HEK293 (cell line): ENCODE measurements at regions of chr18 and their contacts with region 1.

Region 1: DNA sequence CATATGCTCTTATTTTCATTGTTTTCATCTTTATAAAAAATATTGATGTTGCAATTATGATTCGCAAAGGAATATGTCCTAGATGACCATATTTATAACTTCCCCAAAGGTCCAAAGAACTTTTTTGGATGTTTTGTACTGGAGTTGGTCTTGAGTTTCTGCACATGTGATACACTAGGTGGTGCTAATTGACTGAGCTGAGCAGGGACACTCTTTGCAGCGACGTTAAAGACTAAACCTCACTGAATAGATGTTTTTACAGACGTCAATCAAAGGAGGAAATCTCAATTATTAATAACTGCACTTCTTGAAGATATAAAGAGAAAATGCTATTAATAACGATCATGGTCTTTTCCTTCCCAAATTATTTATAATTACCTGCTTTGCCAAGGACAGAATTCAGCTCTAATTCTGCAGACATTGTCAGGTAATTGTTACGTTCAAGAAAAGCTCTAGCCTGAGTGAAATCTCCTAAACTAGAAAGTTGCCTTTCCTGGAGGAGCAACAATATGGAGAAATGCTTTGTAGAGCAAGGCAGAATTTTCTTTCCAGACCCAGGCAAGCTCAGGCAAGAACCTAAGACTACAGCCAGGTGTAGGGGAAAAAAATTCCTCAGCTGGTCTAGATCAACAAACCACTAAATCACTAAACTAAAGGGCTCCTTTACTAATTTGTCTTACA is 119.3 kb upstream of the RBBP8 start:
- H3K4me3 ChIP-seq: no peak overlapping the region
- H3K27ac ChIP-seq: no peak overlapping the region
- H3K4me1 ChIP-seq: no peaks in the 10 kb centered on the region; the same call in 1 of the 2 replicates
- CTCF ChIP-seq: peak; percentile 57

Region 2: DNA sequence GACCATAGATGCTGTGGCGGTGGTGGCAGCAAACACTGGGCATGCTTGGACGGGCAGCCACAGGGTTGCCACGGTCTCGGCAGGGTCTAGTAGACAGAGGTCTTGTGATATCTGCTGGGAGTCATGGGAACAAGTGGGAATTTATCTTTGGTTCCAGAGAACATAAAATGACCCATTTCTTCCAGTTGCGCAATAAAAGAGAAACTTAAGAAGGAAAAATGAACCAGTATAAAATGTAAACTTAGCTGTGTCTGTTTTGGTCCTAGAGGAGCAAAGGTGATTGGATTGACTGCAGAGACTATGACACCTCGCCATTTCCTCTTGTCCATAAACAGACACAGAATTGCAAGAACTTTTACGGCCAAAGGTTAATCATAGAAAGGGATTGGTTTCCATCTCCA is 13.2 kb before region 1 on chr18:
- CTCF ChIA-PET with region 1: interaction called, 32 read pairs
- POLR2A ChIA-PET with region 1: interaction called, 3 read pairs
- H3K4me3 ChIP-seq: no peak overlapping the region
- H3K27ac ChIP-seq: no peak overlapping the region
- H3K4me1 ChIP-seq: 0 out of 2 replicates have a peak, but pooled peaks cover 4% of the 10 kb centered on the region
- CTCF ChIP-seq: no peak

Region 3: GRCh38 chr18:22977847-22978701 is 164.3 kb after region 1 on chr18:
- CTCF ChIA-PET with region 1: interaction called, 51 read pairs
- POLR2A ChIA-PET with region 1: no interaction called
- H3K4me3 ChIP-seq: no peak overlapping the region
- H3K27ac ChIP-seq: no peak overlapping the region
- H3K4me1 ChIP-seq: peaks cover 3% of the 10 kb centered on the region; the same call in 1 of the 2 replicates
- CTCF ChIP-seq: no peak

Region 4: DNA sequence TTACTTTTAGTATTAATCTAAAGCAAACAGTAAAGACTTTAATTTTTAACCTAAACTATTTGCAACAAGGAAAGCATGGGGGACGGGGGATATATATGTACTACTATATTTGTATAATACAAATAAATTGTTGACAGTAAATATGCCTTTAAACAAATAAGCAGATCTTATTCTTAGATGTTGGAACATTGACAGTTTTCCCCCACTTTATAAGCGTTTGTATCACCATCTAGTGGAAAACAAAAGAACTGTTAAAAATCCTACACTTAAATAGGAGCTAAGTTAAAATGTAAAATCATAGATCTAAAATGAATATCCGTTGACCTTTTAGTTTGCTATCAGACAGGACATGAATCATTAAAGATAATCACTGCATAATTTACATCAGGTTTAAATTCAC is 169.4 kb after region 1 on chr18:
- CTCF ChIA-PET with region 1: interaction called, 51 read pairs
- POLR2A ChIA-PET with region 1: no interaction called
- H3K4me3 ChIP-seq: no peak overlapping the region
- H3K27ac ChIP-seq: no peak overlapping the region
- H3K4me1 ChIP-seq: no peaks in the 10 kb centered on the region
- CTCF ChIP-seq: 0 out of 2 replicates have a peak, but pooled peaks have one; percentile 7

Region 5: DNA sequence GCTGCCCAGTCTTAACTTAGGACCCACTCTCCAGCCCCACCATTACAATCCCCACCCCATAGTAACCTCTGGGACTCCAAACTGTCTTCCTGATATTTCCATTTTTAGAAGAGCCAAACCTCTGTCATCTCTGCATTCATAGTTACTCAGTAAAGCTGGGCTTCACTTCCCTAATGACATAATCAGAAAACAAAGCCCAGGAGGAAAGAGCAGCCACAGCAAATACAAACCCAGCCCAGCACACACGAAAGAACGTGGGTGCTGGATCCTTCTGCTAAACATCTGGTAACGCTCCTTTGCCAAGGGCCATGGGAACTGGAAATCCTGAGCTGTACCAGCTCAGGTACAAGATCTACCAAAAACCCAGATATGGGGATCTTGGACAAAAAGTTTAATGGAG is 602.5 kb after region 1 on chr18:
- CTCF ChIA-PET with region 1: interaction called, 12 read pairs
- POLR2A ChIA-PET with region 1: no interaction called
- H3K4me3 ChIP-seq: no peak overlapping the region
- H3K27ac ChIP-seq: no peak overlapping the region
- H3K4me1 ChIP-seq: no peaks in the 10 kb centered on the region
- CTCF ChIP-seq: no peak